Vagina (tissue), 2 donors: ENCODE measurements at regions of chr11 and their contacts with region 1.

Region 1: DNA sequence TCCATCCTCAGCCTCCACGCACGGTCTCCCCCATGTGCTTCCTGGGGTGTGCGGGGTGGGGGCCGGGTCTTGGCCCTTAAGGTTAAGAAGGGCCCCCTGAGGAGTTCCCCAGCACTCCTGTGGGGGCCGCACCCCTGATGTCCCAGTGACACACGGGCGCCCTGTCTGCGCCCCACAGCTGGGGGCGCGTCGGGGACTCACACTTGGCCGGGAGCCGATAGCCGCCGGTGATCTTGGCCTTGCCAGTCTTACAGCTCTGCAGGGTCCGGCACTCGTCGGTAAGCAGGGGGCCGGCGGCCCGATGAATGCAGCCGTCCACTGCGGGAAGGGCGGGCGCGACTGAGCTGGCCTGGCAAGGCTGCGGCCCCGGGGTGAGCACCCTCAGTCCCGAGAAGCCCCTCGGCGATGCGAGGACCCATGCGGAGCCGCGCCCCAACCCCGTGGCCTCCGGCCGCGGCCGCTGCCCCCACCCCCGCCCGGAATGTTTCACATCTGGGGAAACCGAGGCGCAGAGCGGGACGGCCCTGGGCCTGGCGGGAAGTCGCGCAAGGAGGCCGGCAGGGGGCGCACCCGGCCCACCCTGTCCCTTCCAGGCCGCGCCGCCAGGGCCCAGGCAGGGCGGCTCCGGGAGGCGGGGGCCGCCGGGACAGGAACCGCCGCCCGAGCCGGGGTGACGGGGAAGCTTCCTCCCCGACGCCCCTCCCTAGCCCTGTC is 13.9 kb downstream of the OTUB1 start:
- DNase-seq: no peak
- H3K4me3 ChIP-seq: peak overlapping the region; percentile 17 to 41
- H3K27ac ChIP-seq: peak overlapping the region; percentile 54
- H3K4me1 ChIP-seq: peaks cover 44% of the 10 kb centered on the region
- H3K27me3 ChIP-seq: no peaks in the 10 kb centered on the region
- CTCF ChIP-seq: peak; percentile 76 to 86 (median 85)
- POLR2A ChIP-seq: no peak

Region 2: GRCh38 chr11:63847363-63847762 is 152.8 kb before region 1 on chr11:
- intact Hi-C with region 1: no loop called
- DNase-seq: no peak
- H3K4me3 ChIP-seq: no peak overlapping the region
- H3K27ac ChIP-seq: peak overlapping the region; percentile 36
- H3K4me1 ChIP-seq: peaks cover 75% of the 10 kb centered on the region
- H3K27me3 ChIP-seq: no peaks in the 10 kb centered on the region
- CTCF ChIP-seq: no peak
- POLR2A ChIP-seq: no peak

Region 3: GRCh38 chr11:64148200-64148916 is 148.2 kb after region 1 on chr11:
- intact Hi-C with region 1: loop called (anchors 1 kb)
- DNase-seq: no peak
- H3K4me3 ChIP-seq: peak overlapping the region; percentile 12 to 34
- H3K27ac ChIP-seq: peak overlapping the region; percentile 69
- H3K4me1 ChIP-seq: peaks cover 25% of the 10 kb centered on the region
- H3K27me3 ChIP-seq: no peaks in the 10 kb centered on the region
- CTCF ChIP-seq: peak; percentile 91 to 97 (median 96)
- POLR2A ChIP-seq: no peak